GM13977 (cell line): ENCODE measurements at regions of chr12 and their contacts with region 1.

Region 1: DNA sequence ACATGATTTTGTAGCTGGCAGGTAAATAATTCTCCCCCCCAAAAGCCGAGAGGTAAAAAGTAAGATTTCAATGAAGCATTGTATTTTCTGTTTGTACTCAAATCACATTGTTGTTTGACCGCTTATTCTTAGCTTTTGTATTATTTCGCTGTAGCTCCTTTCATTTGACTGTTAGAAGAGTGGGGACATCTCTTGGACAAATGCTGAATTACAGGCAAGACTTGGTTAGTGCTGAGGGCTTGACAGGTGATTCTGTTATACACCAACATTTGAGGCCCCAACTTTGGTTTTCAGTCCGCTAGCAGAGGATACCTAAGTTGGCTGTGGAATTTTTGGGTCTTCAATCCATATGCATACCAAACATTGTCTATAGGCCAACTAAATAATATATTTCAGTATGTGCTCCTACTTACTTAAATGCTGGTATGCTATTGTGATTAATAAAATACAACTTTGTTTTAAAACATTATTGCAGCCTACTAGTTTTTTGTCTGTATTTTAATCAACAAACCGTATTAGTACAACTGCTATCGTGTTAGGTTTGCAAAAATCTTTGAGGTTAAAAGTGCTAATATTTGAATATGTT is 102.2 kb downstream of the ERC1 start:
- DNase-seq: peak; percentile 31
- CTCF ChIP-seq: peak; percentile 73

Region 2: DNA sequence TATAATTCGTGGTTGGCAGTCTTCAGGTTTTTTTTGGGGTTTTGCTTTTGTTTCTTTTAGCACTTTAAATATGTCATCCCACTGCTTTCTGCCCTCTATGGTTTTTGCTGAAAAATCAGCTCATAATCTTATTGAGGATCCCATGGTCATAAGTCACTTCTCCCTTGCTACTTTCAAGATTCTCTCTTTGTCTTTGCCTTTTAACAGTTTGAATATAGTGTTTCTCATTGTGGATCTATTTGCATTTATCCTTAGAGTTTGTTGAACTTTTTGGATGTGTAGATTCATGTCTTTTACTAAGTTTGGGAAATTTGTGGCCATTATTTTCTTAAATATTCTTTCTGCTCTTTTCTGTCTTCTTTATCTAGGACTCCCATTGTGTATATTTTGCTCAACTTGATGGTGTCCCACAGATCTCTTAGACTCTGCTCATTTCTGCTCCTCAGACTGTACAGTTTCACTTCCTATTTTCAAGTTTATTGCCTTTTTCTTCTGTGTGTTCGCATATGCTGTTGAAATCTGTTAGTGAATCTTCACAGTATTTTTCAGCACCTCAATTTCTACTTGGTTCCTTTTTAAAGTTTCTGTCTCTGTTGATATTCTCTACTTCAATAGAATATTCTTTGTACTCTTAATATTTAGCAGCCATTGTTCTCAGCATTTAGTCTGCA is 270.1 kb before region 1 on chr12:
- in situ Hi-C with region 1: loop called (anchors 25 kb)
- DNase-seq: peak; percentile 56
- CTCF ChIP-seq: no peak